BJ (cell line): ENCODE measurements at regions of chr22 and their contacts with region 1.

Region 1: GRCh38 chr22:30005213-30005857 is 74.9 kb upstream of the HORMAD2 start:
- DNase-seq: no peak
- H3K4me3 ChIP-seq: no peak overlapping the region
- H3K27me3 ChIP-seq: no peaks in the 10 kb centered on the region
- CTCF ChIP-seq: peak; percentile 99

Region 2: GRCh38 chr22:29689880-29690213 is 315.5 kb before region 1 on chr22:
- CTCF ChIA-PET with region 1: interaction called, 13 read pairs
- POLR2A ChIA-PET with region 1: no interaction called
- DNase-seq: no peak
- H3K4me3 ChIP-seq: no peak overlapping the region
- H3K27me3 ChIP-seq: no peaks in the 10 kb centered on the region
- CTCF ChIP-seq: peak; percentile 84

Region 3: GRCh38 chr22:29820961-29821789 is 184.2 kb before region 1 on chr22:
- CTCF ChIA-PET with region 1: interaction called, 10 read pairs
- POLR2A ChIA-PET with region 1: no interaction called
- DNase-seq: peak; percentile 23
- H3K4me3 ChIP-seq: no peak overlapping the region
- H3K27me3 ChIP-seq: no peaks in the 10 kb centered on the region
- CTCF ChIP-seq: no peak

Region 4: DNA sequence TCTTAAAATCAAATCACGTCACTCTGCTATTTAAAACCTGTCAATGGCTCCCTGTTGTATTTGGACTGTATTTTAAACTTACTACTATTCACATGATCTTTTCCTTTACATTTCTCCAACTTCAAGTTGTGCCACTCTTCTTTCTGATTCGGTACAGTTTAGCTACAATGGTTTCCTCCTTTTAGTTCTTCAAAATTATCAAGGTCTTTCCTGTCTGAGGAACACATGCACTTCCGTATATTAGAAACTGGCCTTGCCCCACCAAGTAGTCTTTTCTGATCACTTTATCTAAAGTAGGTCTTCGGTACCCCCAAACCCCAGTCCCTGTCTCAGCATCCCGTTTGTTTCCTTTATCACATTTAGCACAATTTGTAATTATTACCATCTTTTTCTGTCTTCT is 40.6 kb before region 1 on chr22:
- CTCF ChIA-PET with region 1: no interaction called
- POLR2A ChIA-PET with region 1: no interaction called
- DNase-seq: no peak
- H3K4me3 ChIP-seq: no peak overlapping the region
- H3K27me3 ChIP-seq: no peaks in the 10 kb centered on the region
- CTCF ChIP-seq: no peak

Region 5: DNA sequence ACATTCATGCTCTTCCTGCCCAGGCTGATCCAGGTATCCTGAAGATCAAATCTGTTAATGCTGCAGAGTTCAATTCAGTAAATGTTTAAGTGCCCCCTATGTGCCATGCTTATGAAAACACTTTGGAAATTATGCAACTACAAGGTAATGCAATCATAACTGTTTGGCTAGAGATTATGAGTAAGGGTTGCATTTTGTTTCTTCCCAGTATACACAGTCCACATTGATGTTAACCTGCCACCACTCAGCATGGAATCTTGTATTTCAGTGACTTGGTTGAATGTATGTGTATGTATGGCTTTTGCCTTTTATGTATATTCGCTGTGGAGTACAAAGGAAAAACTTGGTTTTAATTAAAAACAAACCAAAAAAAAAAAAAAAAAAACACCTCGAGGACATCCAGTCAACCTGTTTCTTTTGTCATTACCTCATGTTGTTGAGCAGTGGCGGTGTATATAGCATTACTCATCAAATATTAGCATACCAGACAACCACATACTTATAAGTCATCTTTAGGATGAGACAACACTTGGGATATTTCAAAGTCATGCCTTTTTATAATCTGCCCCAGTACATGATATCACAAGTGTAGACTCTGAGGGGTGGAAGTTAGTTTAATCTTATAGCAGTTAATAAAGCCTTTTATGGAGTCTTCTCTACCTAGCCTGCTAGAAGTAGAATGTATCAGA is 11.2 kb before region 1 on chr22:
- CTCF ChIA-PET with region 1: interaction called, 40 read pairs
- POLR2A ChIA-PET with region 1: no interaction called
- DNase-seq: peak; percentile 38
- H3K4me3 ChIP-seq: no peak overlapping the region
- H3K27me3 ChIP-seq: no peaks in the 10 kb centered on the region
- CTCF ChIP-seq: peak; percentile 18; the same call in 1 of the 2 replicates

Region 6: GRCh38 chr22:30044369-30044768 is 39.0 kb after region 1 on chr22:
- CTCF ChIA-PET with region 1: no interaction called
- POLR2A ChIA-PET with region 1: no interaction called
- DNase-seq: peak; percentile 74
- H3K4me3 ChIP-seq: no peak overlapping the region
- H3K27me3 ChIP-seq: no peaks in the 10 kb centered on the region
- CTCF ChIP-seq: no peak

Region 7: DNA sequence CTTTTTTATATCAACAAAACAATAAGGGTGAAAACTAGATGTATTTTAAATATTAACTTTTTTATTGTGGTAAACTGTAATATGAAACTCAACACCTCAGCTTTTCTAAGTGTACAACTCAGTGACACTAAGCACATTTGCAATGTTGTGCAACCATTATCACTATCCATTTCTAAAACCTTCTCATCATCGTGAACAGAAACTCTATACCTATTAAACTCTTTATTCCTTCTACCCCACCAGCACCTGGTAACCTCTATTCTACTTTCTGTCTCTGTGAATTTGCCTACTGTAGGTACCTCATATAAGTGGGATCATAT is 84.3 kb after region 1 on chr22:
- CTCF ChIA-PET with region 1: interaction called, 10 read pairs
- POLR2A ChIA-PET with region 1: no interaction called
- DNase-seq: no peak
- H3K4me3 ChIP-seq: no peak overlapping the region
- H3K27me3 ChIP-seq: no peaks in the 10 kb centered on the region
- CTCF ChIP-seq: no peak